ENCODE measurements at regions of chr2 and their contacts with region 1.

Region 1: GRCh38 chr2:191625016-191625415 is 52.9 kb upstream of the NABP1 start:
- DNase-seq: peak; percentile 83
- H3K4me3 ChIP-seq: peak overlapping the region in 1 of 8 donors; percentile 22
- H3K27ac ChIP-seq: peak overlapping the region in 6 of 8 donors; percentile 23 to 77 (median 57)
- H3K4me1 ChIP-seq: peaks cover 0 to 52% (median 8%) of the 10 kb centered on the region in 6 donors
- H3K27me3 ChIP-seq: no peaks in the 10 kb centered on the region
- CTCF ChIP-seq: no peak
- POLR2A ChIP-seq: no peak

Region 2: GRCh38 chr2:191656391-191656790 is 31.4 kb after region 1 on chr2:
- intact Hi-C with region 1: no loop called
- DNase-seq: no peak
- H3K4me3 ChIP-seq: no peak overlapping the region
- H3K27ac ChIP-seq: peak overlapping the region in 7 of 8 donors; percentile 46 to 79 (median 62)
- H3K4me1 ChIP-seq: peaks cover 0 to 18% (median 5%) of the 10 kb centered on the region in 6 donors
- H3K27me3 ChIP-seq: no peaks in the 10 kb centered on the region
- CTCF ChIP-seq: no peak
- POLR2A ChIP-seq: no peak

Region 3: DNA sequence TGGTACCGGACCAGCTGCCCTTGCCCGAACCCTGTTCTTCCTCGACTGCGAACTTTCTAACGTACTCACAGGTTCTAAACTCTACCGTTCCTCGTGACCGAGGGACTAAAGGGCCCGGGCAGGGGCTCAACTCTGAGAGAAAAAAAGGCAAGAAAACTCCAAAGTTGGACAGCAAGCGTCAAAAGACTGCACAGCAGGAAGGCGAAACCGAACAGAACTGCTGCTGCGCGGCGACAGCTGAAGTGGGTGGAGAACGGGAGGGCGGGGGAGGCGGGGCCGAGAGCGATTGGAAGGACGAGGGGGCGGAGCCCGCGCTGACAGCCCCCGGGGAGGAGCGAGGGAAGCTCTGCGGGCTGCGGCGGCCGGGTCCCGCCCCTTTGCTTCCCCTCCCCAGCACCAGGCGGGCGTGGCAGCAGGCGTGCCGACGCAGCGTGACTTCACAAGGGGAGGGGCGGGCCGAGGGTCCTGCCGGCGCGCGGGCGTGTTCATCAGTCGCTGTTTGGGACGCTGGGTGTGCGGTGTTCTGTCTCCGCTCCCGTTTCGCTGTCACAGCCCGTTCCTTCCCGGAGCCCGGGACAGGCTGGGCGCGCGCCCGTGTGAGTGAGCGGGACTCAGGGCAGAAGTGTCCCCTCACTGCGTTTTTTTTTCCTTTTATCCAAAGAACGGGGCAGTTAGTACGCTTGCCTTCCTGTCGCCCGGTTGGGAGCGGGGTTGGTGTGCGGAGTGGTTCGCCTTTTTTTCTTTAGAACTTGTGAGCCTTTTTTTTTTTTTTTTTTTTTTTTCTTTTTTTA is 52.8 kb after region 1 on chr2 and contains the start of gene NABP1:
- intact Hi-C with region 1: loop called (anchors 10 kb)
- DNase-seq: peak; percentile 100
- H3K4me3 ChIP-seq: peak within 1 kb of the TSS; percentile 46 to 86 (median 62)
- H3K27ac ChIP-seq: peak within 1 kb of the TSS; percentile 93 to 99 (median 98)
- H3K4me1 ChIP-seq: peaks cover 29 to 72% (median 64%) of the 10 kb centered on the region in 6 donors
- H3K27me3 ChIP-seq: no peaks in the 10 kb centered on the region
- CTCF ChIP-seq: peak in 4 of 11 experiments; percentile 7 to 40 (median 26)
- POLR2A ChIP-seq: peak; percentile 99 to 100 (median 99)
- total RNA-seq, gene NABP1: 150 to 292 (median 192) TPM